Activated CD8-positive, alpha-beta T cell treated with anti-CD3 and anti-CD28 coated beads for 36 hours (primary cell): ENCODE measurements at regions of chr3 and their contacts with region 1.

Region 1: DNA sequence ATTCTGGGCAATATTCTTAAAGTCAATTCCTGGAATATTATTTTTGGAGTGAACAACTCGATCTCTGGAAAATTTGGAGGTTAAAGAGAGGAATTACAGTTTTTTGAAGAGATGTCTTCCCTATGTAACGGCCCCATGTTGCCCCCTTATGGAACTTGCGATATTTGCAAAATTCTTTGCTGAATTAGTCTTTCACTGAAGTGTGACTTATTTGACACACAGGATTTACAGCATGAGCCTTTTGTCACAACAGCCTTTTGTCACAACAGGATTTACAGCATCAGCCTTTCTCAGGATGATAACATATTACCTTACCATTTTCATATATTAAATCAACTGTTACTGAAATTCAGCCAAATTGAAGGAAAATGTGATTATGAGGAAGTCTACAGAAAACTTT is 37.8 kb upstream of the SPTSSB start:
- DNase-seq: peak; percentile 56
- ATAC-seq: peak; percentile 58
- H3K4me3 Mint-ChIP-seq: no peak overlapping the region
- H3K27ac Mint-ChIP-seq: no peak overlapping the region
- H3K4me1 Mint-ChIP-seq: peaks cover 17% of the 10 kb centered on the region
- H3K27me3 Mint-ChIP-seq: peaks cover 6% of the 10 kb centered on the region
- CTCF ChIP-seq: peak; percentile 83

Region 2: GRCh38 chr3:160956806-160957205 is 452.3 kb before region 1 on chr3:
- CTCF ChIA-PET with region 1: interaction called, 7 read pairs
- POLR2A ChIA-PET with region 1: no interaction called
- intact Hi-C with region 1: loop called (anchors 10 kb)
- DNase-seq: no peak
- ATAC-seq: peak; percentile 62
- H3K4me3 Mint-ChIP-seq: no peak overlapping the region
- H3K27ac Mint-ChIP-seq: no peak overlapping the region
- H3K4me1 Mint-ChIP-seq: no peaks in the 10 kb centered on the region
- H3K27me3 Mint-ChIP-seq: no peaks in the 10 kb centered on the region
- CTCF ChIP-seq: peak; percentile 35

Region 3: DNA sequence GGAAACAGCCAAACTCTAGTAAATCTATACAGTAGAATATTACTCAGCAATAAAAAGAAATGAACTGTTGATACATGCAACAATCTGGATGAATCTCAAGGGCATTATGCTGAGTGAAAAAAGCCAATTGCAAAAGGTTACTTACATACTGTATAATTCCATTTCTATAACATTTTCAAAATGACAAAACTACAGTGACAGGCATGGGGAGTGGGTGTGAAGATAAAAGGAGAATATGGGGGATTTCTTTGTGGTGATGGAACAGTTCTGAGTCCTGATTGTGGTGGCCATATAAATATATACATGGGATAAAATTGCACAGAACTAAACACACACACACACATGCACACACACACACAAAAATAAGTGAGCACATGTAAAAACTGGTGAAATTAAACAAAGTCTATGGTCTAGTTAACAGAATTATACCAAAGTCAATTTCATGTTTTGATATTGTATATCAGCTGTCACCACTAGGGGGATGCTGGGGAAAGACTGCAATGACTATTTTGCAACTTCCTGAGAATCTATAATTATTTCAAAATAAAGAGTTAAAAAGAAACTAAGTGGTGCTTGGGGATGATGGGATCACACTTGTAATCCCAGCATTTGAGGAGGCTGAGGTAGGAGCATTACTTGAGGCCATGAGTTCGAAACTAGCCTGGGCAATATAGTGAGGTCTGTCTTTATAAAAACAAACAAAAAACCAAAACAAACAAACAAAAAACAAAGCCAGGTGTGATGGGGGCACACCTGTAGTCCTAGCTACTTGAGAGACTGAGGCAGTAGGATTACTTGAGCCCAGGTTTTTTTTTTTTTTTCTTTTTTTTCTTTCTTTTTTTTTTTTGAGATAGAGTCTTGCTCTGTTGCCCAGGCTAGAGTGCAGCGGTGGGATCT is 103.7 kb before region 1 on chr3:
- CTCF ChIA-PET with region 1: interaction called, 18 read pairs
- POLR2A ChIA-PET with region 1: no interaction called
- intact Hi-C with region 1: no loop called
- DNase-seq: peak; percentile 20
- ATAC-seq: peak; percentile 58
- H3K4me3 Mint-ChIP-seq: no peak overlapping the region
- H3K27ac Mint-ChIP-seq: no peak overlapping the region
- H3K4me1 Mint-ChIP-seq: peaks cover 30% of the 10 kb centered on the region
- H3K27me3 Mint-ChIP-seq: peaks cover 25% of the 10 kb centered on the region
- CTCF ChIP-seq: peak; percentile 86